Activated CD8-positive, alpha-beta T cell treated with anti-CD3 and anti-CD28 coated beads, Interleukin-2, amount 10 ng/mL, durations not matched to agents 7 days and 5 days (primary cell): ENCODE measurements at regions of chr11 and their contacts with region 1.

Region 1: GRCh38 chr11:68257475-68258362 is 14.1 kb downstream of the C11orf24 start:
- DNase-seq: peak; percentile 97
- ATAC-seq: peak; percentile 93
- H3K4me3 Mint-ChIP-seq: no peak overlapping the region
- H3K27ac Mint-ChIP-seq: peak overlapping the region; percentile 78
- H3K4me1 Mint-ChIP-seq: peaks cover 9% of the 10 kb centered on the region
- H3K27me3 Mint-ChIP-seq: no peaks in the 10 kb centered on the region

Region 2: DNA sequence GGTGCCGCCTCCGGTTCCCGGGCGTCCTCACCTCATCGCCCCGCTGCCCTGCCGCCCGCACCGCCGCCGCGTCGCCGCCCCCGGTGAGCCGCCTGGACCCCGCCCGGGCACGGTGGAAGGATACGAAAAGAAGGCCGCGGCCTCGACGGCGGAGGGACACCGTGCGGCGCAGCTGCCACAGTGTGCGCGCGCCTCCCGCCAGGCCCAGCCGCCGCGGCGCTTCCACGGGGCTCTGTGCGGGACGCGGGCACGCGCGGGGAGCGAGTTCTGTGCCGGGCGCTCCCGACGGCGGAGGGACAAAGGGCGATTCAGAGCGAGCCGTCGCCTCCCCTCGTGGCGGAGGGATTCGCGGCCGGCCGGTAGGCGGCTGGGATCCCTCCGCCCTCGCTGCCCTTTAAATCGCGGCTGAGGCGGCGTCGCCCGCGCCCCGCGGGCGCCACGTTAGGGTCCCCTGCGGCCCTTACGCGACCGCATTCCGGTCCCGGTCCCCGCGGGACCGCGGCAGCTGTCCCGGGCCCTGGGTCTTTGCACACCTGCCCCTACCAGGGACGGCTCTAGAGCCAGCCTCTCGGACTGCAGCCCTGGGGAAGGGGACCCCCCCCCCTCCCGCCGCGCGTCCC is 44.1 kb before region 1 on chr11:
- CTCF ChIA-PET with region 1: interaction called, 10 read pairs
- POLR2A ChIA-PET with region 1: no interaction called
- DNase-seq: peak; percentile 80
- ATAC-seq: peak; percentile 58
- H3K4me3 Mint-ChIP-seq: peak overlapping the region; percentile 69
- H3K27ac Mint-ChIP-seq: peak overlapping the region; percentile 85
- H3K4me1 Mint-ChIP-seq: peaks cover 33% of the 10 kb centered on the region
- H3K27me3 Mint-ChIP-seq: peaks cover 24% of the 10 kb centered on the region

Region 3: GRCh38 chr11:68271781-68272608 is 14.3 kb after region 1 on chr11 and contains the start of gene C11orf24:
- CTCF ChIA-PET with region 1: interaction called, 61 read pairs
- POLR2A ChIA-PET with region 1: no interaction called
- DNase-seq: peak; percentile 95
- ATAC-seq: peak; percentile 92
- H3K4me3 Mint-ChIP-seq: peak within 1 kb of the TSS; percentile 93
- H3K27ac Mint-ChIP-seq: peak within 1 kb of the TSS; percentile 98
- H3K4me1 Mint-ChIP-seq: peaks cover 43% of the 10 kb centered on the region
- H3K27me3 Mint-ChIP-seq: no peaks in the 10 kb centered on the region
- total RNA-seq, gene C11orf24: 29.2 to 30.0 TPM

Region 4: GRCh38 chr11:68303982-68304780 is 46.5 kb after region 1 on chr11:
- CTCF ChIA-PET with region 1: interaction called, 170 read pairs
- POLR2A ChIA-PET with region 1: no interaction called
- DNase-seq: no peak
- ATAC-seq: no peak
- H3K4me3 Mint-ChIP-seq: no peak overlapping the region
- H3K27ac Mint-ChIP-seq: no peak overlapping the region
- H3K4me1 Mint-ChIP-seq: peaks cover 24% of the 10 kb centered on the region
- H3K27me3 Mint-ChIP-seq: peaks cover 2% of the 10 kb centered on the region

Region 5: DNA sequence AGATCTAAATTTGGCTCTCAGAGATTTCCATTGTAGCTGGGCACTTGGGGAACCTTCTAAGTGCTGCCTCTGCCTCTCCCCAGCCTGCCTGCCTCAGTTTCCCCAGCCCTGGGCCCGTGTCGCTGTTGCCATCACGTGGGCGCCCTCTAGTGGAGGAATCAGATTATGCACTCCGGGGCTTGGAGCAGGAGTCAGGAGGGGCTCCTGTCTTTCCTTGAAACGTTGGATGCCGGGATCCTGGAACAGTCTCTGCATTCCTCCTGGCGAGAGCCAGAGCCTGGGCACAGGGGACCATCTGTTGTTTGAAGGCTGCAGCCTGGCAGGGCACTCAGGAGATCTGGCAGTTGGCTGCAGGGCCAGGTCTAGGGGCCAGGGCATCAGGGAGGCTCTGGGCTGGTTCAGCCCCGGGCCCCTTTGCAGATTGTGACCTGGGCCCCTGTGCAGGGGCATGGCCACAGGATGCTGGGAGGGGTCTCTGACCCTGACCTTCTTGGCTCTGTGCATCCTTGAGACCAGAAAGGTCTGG is 126.3 kb after region 1 on chr11:
- CTCF ChIA-PET with region 1: interaction called, 25 read pairs
- POLR2A ChIA-PET with region 1: no interaction called
- DNase-seq: peak; percentile 74
- ATAC-seq: peak; percentile 29
- H3K4me3 Mint-ChIP-seq: no peak overlapping the region
- H3K27ac Mint-ChIP-seq: no peak overlapping the region
- H3K4me1 Mint-ChIP-seq: peaks cover 49% of the 10 kb centered on the region
- H3K27me3 Mint-ChIP-seq: no peaks in the 10 kb centered on the region